ENCODE measurements at regions of chr7 and their contacts with region 1.

Region 1: GRCh38 chr7:13933091-13933490 is 56.4 kb downstream of the ETV1 start:
- DNase-seq: no peak
- H3K4me3 ChIP-seq: no peak overlapping the region
- H3K27ac ChIP-seq: no peak overlapping the region
- H3K4me1 ChIP-seq: peaks cover 8% of the 10 kb centered on the region
- H3K27me3 ChIP-seq: no peaks in the 10 kb centered on the region
- CTCF ChIP-seq: no peak
- POLR2A ChIP-seq: no peak

Region 2: DNA sequence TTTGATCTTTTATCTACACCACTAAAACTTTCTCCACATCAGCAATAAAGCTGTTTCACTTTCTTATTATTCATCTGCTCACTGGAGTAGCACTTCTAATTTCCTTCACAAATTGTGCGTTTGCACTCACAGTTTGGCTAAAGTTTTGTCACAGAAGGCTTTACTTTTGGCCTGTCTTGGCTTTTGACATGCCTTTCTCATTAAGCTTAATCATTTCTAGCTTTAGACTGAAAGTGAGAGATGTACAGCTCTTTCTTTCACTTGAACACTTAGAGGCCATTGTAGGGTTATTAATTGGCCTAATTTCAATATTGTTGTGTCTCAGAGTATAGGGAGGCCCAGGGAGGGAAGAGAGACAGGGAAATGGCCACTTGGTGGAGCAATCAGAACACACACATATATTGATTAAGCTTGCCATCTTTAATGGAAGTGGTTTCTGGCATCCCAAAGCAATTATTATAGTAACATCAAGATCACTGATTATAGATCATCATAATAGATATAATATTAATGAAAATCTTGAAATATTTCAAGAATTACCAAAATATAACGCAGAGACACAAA is 456.1 kb before region 1 on chr7:
- intact Hi-C with region 1: no loop called
- DNase-seq: no peak
- H3K4me3 ChIP-seq: no peak overlapping the region
- H3K27ac ChIP-seq: no peak overlapping the region
- H3K4me1 ChIP-seq: no peaks in the 10 kb centered on the region
- H3K27me3 ChIP-seq: no peaks in the 10 kb centered on the region
- CTCF ChIP-seq: no peak
- POLR2A ChIP-seq: no peak

Region 3: DNA sequence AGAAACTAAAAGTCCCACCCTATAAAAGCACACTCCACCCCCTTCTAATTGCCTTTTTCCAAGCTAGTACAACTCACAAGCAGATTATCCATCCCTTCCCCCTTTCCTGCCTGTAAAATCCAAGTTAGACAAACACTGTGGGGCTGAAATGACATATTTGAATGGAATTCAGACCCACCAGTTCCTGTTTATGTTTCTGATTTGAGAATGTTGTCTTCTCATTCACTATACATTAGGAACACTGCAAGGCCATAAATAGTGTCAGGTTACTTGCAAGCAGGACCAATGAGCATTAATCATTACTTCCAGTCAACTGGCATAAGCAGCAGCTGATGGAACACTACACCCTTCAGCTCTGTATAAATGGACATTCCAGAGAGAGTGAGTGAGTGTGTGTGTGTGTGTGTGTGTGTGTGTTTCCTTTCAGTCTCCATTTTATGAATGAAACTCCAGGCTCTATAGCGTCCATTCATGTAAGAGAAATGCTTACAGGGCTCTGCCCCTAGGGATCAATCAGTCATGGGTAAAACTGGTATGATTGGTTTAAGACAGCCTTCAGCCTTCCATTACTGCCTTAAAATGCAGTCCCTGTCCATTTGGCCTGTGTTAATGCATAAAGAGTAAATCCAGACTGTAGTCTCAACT is 12.9 kb before region 1 on chr7:
- intact Hi-C with region 1: loop called (anchors 2 kb)
- DNase-seq: no peak
- H3K4me3 ChIP-seq: no peak overlapping the region
- H3K27ac ChIP-seq: no peak overlapping the region
- H3K4me1 ChIP-seq: peaks cover 6% of the 10 kb centered on the region
- H3K27me3 ChIP-seq: no peaks in the 10 kb centered on the region
- CTCF ChIP-seq: no peak
- POLR2A ChIP-seq: no peak